Activated naive CD4-positive, alpha-beta T cell treated with anti-CD3 and anti-CD28 coated beads for 36 hours (primary cell): ENCODE measurements at regions of chr3 and their contacts with region 1.

Region 1: GRCh38 chr3:130746246-130747039 is at the start of gene PIK3R4:
- DNase-seq: peak; percentile 98
- H3K4me3 Mint-ChIP-seq: peak within 1 kb of the TSS; percentile 81
- H3K27ac Mint-ChIP-seq: peak within 1 kb of the TSS; percentile 84
- H3K4me1 Mint-ChIP-seq: peaks cover 40% of the 10 kb centered on the region
- H3K27me3 Mint-ChIP-seq: no peaks in the 10 kb centered on the region
- total RNA-seq, gene PIK3R4: 25.8 to 28.6 TPM

Region 2: GRCh38 chr3:130414457-130414856 is 332.0 kb before region 1 on chr3:
- CTCF ChIA-PET with region 1: no interaction called
- intact Hi-C with region 1: no loop called
- DNase-seq: no peak
- H3K4me3 Mint-ChIP-seq: no peak overlapping the region
- H3K27ac Mint-ChIP-seq: no peak overlapping the region
- H3K4me1 Mint-ChIP-seq: no peaks in the 10 kb centered on the region
- H3K27me3 Mint-ChIP-seq: peaks cover 11% of the 10 kb centered on the region

Region 3: DNA sequence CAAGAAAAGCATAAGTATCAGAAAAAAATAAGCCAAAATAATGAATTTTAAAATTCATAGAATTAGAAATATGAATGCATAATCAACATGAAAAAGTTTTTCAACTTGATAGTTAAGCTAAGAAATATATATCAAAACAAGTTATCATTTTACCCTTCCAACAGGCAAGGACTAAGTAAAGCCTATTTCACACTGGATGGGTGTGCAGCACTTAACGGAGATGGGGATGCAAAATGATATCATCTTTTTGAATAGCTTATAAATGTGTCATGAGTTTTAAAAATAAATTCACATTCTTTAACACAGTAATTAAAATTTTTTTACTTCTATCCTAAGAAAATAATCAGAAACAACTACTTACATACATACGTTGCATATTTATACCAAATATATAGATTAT is 20.7 kb before region 1 on chr3:
- CTCF ChIA-PET with region 1: no interaction called
- intact Hi-C with region 1: loop called (anchors 1 kb)
- DNase-seq: no peak
- H3K4me3 Mint-ChIP-seq: no peak overlapping the region
- H3K27ac Mint-ChIP-seq: no peak overlapping the region
- H3K4me1 Mint-ChIP-seq: peaks cover 9% of the 10 kb centered on the region
- H3K27me3 Mint-ChIP-seq: no peaks in the 10 kb centered on the region

Region 4: GRCh38 chr3:130759699-130760338 is 13.4 kb after region 1 on chr3:
- CTCF ChIA-PET with region 1: interaction called, 5 read pairs
- intact Hi-C with region 1: loop called (anchors 1 kb)
- DNase-seq: peak; percentile 77
- H3K4me3 Mint-ChIP-seq: no peak overlapping the region
- H3K27ac Mint-ChIP-seq: no peak overlapping the region
- H3K4me1 Mint-ChIP-seq: no peaks in the 10 kb centered on the region
- H3K27me3 Mint-ChIP-seq: peaks cover 14% of the 10 kb centered on the region

Region 5: DNA sequence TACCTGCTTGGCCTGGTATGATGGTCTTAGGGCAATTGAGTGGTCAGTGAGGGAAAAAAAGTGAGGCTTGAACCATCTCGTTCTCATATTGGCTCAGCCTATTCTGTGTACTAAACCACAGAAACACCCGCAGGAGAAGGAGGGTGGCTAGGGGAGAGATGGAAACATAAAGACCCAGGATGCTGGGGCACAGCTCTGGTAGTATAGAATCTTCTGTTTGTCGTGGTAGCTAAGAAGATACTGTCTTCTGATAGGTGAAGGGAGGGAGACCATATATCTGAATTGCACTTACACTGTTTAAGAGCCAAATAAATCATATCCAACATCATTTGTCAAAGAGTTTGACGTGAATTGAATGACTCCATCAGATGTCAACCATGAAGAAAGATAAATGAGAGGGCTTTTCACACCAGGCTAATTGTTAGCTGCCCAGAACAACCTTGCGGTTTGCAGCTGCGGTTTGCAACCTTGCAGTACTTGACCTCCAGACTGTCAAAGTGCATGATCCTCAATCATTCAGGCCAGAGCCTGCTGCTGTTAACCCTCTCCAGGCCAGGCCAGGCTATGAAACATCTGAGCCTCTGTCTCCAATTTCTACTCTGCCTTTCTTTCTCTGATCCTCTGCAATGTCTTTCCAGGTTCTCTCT is 41.1 kb after region 1 on chr3:
- CTCF ChIA-PET with region 1: no interaction called
- intact Hi-C with region 1: no loop called
- DNase-seq: no peak
- H3K4me3 Mint-ChIP-seq: no peak overlapping the region
- H3K27ac Mint-ChIP-seq: no peak overlapping the region
- H3K4me1 Mint-ChIP-seq: no peaks in the 10 kb centered on the region
- H3K27me3 Mint-ChIP-seq: peaks cover 2% of the 10 kb centered on the region

Region 6: DNA sequence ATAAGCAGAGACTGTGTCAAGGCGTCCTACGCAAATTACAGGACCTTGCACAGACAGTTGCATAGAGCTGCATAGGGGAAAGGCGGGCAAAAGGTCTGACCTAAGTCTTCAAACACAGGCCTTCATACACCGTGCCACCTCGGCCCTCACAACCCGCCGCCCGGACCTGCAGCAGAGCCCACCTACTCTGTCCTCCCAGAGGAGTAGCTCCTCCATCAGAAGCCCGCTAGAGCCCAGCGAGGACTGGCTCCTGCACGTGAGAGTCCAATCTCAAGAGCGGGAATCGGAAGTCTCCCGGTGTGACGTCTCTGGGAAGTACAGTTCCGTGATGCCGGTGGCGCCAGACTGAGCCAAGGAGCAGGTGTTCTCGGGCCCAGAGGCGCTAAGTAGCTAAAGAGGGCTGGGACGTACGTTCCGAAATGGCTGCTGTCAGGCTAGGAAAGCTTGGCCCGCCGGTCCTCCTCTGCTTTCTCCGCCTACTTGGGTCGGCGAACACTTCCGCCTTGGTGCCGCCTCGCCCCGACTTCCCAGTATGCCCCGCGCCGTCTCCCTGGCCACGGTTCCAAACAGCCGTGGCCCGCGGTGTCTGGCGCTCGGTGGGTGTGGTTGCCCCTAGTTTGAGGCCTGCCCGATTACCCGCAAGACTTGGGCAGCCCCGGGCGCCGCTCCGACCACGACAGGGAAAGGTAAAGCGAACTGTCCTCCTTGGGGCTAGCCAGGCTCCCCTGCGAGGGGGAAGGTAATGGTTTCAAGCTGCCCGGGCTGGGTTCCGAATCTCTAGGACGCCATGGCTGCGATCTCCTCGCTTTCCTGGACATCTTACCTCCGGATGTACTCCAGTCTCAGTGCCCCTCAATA is 280.1 kb after region 1 on chr3 and contains the starts of genes ASTE1 and NEK11:
- CTCF ChIA-PET with region 1: no interaction called
- intact Hi-C with region 1: loop called (anchors 1 kb)
- DNase-seq: peak; percentile 92
- H3K4me3 Mint-ChIP-seq: peak within 1 kb of the TSS; percentile 92
- H3K27ac Mint-ChIP-seq: peak within 1 kb of the TSS; percentile 94
- H3K4me1 Mint-ChIP-seq: peaks cover 42% of the 10 kb centered on the region
- H3K27me3 Mint-ChIP-seq: no peaks in the 10 kb centered on the region
- total RNA-seq, gene ASTE1: 10.8 to 11.2 TPM
- total RNA-seq, gene NEK11: 1.1 to 1.9 TPM

Region 7: GRCh38 chr3:131381444-131382291 is 635.2 kb after region 1 on chr3 and contains the start of gene NUDT16:
- CTCF ChIA-PET with region 1: no interaction called
- intact Hi-C with region 1: loop called (anchors 1 kb)
- DNase-seq: peak; percentile 97
- H3K4me3 Mint-ChIP-seq: peak within 1 kb of the TSS; percentile 94
- H3K27ac Mint-ChIP-seq: peak within 1 kb of the TSS; percentile 81
- H3K4me1 Mint-ChIP-seq: peaks cover 21% of the 10 kb centered on the region
- H3K27me3 Mint-ChIP-seq: no peaks in the 10 kb centered on the region
- total RNA-seq, gene NUDT16: 4.9 to 5.9 TPM

Region 8: DNA sequence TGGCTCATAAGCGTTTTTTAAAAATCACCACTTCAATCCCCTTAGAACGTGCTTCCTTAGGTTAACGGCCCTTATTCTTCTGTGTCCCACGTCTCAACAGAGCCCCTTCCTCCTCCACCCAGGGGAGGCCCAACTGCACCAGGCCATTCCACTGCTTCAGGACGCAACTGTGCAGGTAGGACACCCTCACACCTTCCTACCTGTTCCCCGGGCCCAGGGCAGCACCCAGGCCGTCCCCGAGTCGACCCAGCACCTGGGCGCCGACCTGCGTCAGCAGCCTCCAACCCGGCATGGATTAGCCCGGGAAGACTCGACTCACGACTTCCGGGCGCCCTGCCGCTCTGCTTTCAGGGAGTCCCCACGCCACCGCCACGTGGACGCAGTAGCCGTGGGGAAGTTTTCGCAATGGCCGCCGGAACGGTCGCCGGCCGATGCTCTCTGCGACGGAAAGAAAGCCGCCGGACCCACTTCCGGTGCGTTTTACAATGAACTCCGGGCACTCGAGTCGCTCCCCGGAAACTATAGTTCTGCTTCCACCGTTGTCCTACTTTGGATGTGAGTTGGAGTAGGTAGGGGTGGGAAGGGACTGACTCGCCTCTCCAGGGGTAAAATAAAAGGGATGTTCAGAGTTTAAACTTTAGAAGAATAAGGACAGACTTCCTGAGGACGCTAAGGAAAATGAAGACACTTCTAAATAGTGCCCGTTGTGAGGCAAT is 756.2 kb after region 1 on chr3 and contains the start of gene MRPL3:
- CTCF ChIA-PET with region 1: no interaction called
- intact Hi-C with region 1: loop called (anchors 2 kb)
- DNase-seq: peak; percentile 90
- H3K4me3 Mint-ChIP-seq: peak within 1 kb of the TSS; percentile 91
- H3K27ac Mint-ChIP-seq: peak within 1 kb of the TSS; percentile 88
- H3K4me1 Mint-ChIP-seq: peaks cover 37% of the 10 kb centered on the region
- H3K27me3 Mint-ChIP-seq: no peaks in the 10 kb centered on the region
- total RNA-seq, gene MRPL3: 151 to 161 TPM